Panc1 (cell line): ENCODE measurements at regions of chr11 and their contacts with region 1.

Region 1: GRCh38 chr11:121810291-121810690 is 305.7 kb downstream of the BLID start:
- DNase-seq: no peak
- ATAC-seq: no peak
- H3K4me3 ChIP-seq: no peak overlapping the region
- H3K27ac ChIP-seq: no peak overlapping the region
- H3K4me1 ChIP-seq: no peaks in the 10 kb centered on the region
- H3K27me3 ChIP-seq: no peaks in the 10 kb centered on the region
- CTCF ChIP-seq: no peak

Region 2: GRCh38 chr11:121841487-121842191 is 31.3 kb after region 1 on chr11:
- CTCF ChIA-PET with region 1: no interaction called
- POLR2A ChIA-PET with region 1: no interaction called
- in situ Hi-C with region 1: no loop called
- intact Hi-C with region 1: loop called (anchors 2 kb)
- DNase-seq: no peak
- ATAC-seq: no peak
- H3K4me3 ChIP-seq: no peak overlapping the region
- H3K27ac ChIP-seq: no peak overlapping the region
- H3K4me1 ChIP-seq: no peaks in the 10 kb centered on the region
- H3K27me3 ChIP-seq: no peaks in the 10 kb centered on the region; the same call in 1 of the 2 replicates
- CTCF ChIP-seq: no peak

Region 3: GRCh38 chr11:122038543-122038942 is 228.3 kb after region 1 on chr11:
- CTCF ChIA-PET with region 1: no interaction called
- POLR2A ChIA-PET with region 1: no interaction called
- in situ Hi-C with region 1: no loop called
- intact Hi-C with region 1: no loop called
- DNase-seq: no peak
- ATAC-seq: peak; percentile 56; the same call in 1 of the 2 replicates
- H3K4me3 ChIP-seq: no peak overlapping the region
- H3K27ac ChIP-seq: no peak overlapping the region
- H3K4me1 ChIP-seq: no peaks in the 10 kb centered on the region
- H3K27me3 ChIP-seq: no peaks in the 10 kb centered on the region
- CTCF ChIP-seq: no peak

Region 4: DNA sequence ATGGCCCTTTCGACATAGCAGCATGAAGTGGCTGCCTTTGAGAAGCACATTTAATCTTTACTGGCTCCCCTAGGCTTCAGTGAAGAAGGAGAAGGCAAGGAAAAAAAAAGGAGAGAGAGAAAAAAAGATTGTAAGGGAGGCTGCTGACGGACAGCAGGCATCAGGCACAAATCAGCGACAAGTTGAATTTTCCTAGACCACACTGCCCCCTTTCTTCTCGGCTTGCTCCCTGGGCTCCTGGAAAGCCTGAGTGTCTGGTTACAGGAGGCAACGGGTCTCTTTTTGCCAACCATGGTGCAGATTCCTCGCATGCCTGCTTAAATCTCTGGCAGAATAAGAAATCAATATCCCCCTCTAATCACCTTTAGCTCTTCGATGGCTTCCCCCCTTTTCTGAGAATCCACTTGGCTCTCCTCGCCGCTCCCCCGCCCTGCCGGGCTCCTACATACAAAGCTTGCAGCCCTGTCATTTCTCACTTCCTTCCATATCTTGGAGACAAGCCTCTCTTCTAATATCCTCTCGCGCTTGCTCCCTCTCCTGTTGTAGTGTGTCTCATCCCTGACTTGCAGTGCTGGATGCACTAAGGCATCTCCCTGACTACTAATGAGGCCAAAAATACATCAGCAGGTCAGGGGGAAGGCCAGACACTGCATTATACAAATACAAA is 291.5 kb after region 1 on chr11:
- CTCF ChIA-PET with region 1: no interaction called
- POLR2A ChIA-PET with region 1: no interaction called
- in situ Hi-C with region 1: no loop called
- intact Hi-C with region 1: no loop called
- DNase-seq: no peak
- ATAC-seq: peak; percentile 57
- H3K4me3 ChIP-seq: peak overlapping the region; percentile 19 to 43; a peak in 3 of 4 replicates
- H3K27ac ChIP-seq: peak overlapping the region; percentile 80
- H3K4me1 ChIP-seq: peaks cover 3% of the 10 kb centered on the region
- H3K27me3 ChIP-seq: no peaks in the 10 kb centered on the region
- CTCF ChIP-seq: peak; percentile 76

Region 5: GRCh38 chr11:122159173-122159721 is 349.0 kb after region 1 on chr11:
- CTCF ChIA-PET with region 1: no interaction called
- POLR2A ChIA-PET with region 1: no interaction called
- in situ Hi-C with region 1: no loop called
- intact Hi-C with region 1: no loop called
- DNase-seq: no peak
- ATAC-seq: peak; percentile 47
- H3K4me3 ChIP-seq: peak overlapping the region; percentile 44 to 73
- H3K27ac ChIP-seq: peak overlapping the region; percentile 98
- H3K4me1 ChIP-seq: peaks cover 52% of the 10 kb centered on the region
- H3K27me3 ChIP-seq: no peaks in the 10 kb centered on the region
- CTCF ChIP-seq: no peak